ENCODE measurements at regions of chr9 and their contacts with region 1.

Region 1: DNA sequence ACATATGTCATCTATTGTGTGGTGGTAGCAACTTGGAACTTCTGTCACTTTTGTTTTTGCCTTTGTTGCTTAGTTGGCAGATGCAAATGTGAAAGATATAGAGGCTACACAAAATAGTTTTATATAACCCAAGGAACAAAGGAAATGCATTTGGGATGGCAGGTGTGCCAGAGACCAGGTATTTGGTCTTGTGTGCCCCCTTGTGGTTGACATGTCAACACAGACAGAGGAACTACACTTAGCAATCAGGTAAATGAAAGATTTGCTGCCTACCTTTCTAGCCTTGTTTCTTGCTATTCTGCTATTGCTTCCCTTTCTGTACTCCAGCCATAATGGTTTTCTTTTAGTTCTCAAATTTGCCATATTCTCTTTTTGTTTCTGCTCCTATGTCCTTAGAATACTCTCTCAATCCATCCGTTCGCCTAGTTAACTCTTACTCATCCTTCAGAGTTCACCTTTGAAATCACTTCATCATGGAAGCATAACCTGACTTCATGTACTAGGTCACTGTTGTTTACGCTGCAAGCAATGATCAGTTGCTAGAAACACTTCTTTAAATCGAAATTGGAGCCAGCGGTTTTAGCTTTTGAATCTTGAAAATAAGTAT is 119.5 kb downstream of the TRPM3 start:
- DNase-seq: peak; percentile 51
- H3K4me3 ChIP-seq: no peak overlapping the region
- H3K27ac ChIP-seq: no peak overlapping the region
- H3K4me1 ChIP-seq: no peaks in the 10 kb centered on the region
- H3K27me3 ChIP-seq: no peaks in the 10 kb centered on the region
- CTCF ChIP-seq: peak; percentile 75 to 78

Region 2: GRCh38 chr9:70639853-70640814 is 361.7 kb before region 1 on chr9:
- CTCF ChIA-PET with region 1: no interaction called
- dilution Hi-C with region 1: no loop called
- in situ Hi-C with region 1: loop called (anchors 5 to 25 kb)
- intact Hi-C with region 1: loop called (anchors 1 kb)
- DNase-seq: peak; percentile 32
- H3K4me3 ChIP-seq: no peak overlapping the region
- H3K27ac ChIP-seq: no peak overlapping the region
- H3K4me1 ChIP-seq: no peaks in the 10 kb centered on the region
- H3K27me3 ChIP-seq: no peaks in the 10 kb centered on the region
- CTCF ChIP-seq: peak; percentile 50 to 68

Region 3: DNA sequence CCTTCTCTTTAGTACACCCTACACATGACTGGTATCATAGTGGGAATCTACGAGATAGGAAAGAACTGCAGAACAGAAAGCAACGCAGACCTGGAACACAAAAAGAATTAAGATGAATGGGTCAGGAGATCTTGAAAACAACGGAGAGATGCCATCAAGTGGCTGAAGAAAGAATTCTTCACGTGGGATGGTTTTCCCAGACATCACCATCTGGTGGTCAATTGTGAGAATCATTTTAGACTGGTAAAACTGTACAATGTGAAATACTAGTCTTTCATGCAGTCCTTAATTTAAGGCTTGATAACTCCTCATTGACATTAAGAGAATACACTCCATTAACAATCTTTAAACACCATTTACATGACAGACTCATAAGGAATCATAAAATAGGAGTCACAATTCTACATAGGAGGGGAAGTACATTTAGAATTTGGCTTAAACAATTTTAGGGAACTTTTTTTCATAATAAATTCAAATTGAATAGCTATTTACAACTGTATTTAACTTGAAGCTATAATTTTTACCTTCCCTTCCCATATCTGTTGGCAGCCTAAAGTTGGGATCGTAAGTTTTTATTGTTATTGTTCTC is 247.9 kb after region 1 on chr9:
- CTCF ChIA-PET with region 1: no interaction called
- dilution Hi-C with region 1: no loop called
- in situ Hi-C with region 1: no loop called
- intact Hi-C with region 1: loop called (anchors 1 kb)
- DNase-seq: peak; percentile 53
- H3K4me3 ChIP-seq: no peak overlapping the region
- H3K27ac ChIP-seq: no peak overlapping the region
- H3K4me1 ChIP-seq: no peaks in the 10 kb centered on the region
- H3K27me3 ChIP-seq: no peaks in the 10 kb centered on the region
- CTCF ChIP-seq: peak; percentile 82 to 83

Region 4: DNA sequence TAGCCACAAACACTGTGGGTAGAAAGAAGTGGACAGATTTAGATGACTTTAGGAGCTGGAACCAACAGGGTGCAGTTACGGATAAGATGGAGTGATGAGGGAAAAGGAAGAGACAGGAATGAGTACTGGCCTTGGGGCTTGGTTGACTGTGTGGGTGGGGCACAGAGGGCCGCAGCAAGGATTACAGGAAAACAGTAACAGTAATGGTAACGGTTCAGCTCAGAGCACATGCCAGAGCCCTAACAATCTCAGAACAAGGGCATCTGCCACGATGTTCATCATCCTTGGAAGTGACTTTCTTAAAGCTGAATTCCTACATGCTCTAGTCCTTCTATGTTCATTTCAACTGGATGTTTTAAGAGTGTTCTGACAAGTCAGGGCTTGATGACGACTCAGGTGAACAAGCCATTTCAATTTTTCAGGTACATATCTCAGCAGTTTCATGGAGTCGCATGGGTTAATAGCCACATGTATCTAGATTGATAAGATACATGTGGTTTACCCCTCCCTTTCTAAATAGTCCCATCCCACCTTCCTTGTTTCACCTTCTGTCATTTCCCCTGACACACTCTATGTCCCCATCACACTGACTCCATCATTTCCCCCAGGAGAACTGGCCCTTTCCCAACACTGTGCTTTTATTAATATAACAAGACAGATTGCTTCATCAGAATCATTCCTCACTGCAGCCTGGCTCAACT is 701.4 kb after region 1 on chr9:
- CTCF ChIA-PET with region 1: no interaction called
- dilution Hi-C with region 1: no loop called
- in situ Hi-C with region 1: no loop called
- intact Hi-C with region 1: no loop called
- DNase-seq: peak; percentile 72
- H3K4me3 ChIP-seq: no peak overlapping the region
- H3K27ac ChIP-seq: peak overlapping the region; percentile 14
- H3K4me1 ChIP-seq: peaks cover 24% of the 10 kb centered on the region
- H3K27me3 ChIP-seq: no peaks in the 10 kb centered on the region
- CTCF ChIP-seq: no peak